Activated B cell treated with CpG ODN at 0.5 μM for 24 hours (primary cell): ENCODE measurements at regions of chr11 and their contacts with region 1.

Region 1: DNA sequence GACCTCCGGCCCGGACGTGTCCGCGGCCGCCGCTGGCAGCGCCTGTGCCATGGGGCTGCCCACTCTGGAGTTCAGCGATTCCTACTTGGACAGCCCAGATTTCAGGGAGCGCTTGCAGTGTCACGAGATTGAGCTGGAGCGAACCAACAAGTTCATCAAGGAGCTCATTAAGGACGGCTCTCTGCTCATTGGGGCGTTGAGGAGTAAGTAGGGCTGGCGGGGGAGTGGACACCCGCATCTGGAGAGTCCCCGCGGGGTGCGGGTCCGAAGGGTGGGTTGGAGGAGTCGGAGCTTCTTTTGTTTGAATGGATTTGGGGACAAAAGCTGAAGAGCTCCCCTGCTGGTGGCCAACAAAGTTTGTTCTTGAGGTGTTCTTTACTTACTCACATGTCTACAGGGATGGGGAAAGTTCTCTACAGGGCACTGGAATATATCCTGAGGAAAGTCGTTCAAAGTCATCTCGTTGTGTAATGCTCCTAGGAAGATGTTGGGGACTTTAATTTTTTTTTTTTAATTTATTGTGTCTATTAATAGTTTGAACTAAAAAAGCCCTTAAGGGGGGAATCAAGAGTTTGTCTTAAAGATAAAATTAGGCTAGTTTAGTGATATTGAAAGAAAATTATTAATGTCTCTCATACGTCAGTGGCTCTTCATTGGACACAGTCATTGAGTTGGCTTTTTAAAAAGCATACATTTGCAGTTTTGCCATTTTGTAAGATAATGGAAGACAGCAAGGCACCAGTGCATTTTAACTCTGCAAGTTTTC is 725 bp downstream of the ARHGAP42 start:
- DNase-seq: peak; percentile 53
- ATAC-seq: peak; percentile 50
- H3K4me3 Mint-ChIP-seq: peak overlapping the region; percentile 98
- H3K27ac Mint-ChIP-seq: peak overlapping the region; percentile 92
- H3K4me1 Mint-ChIP-seq: peaks cover 61% of the 10 kb centered on the region
- H3K27me3 Mint-ChIP-seq: no peaks in the 10 kb centered on the region
- CTCF ChIP-seq: peak; percentile 44

Region 2: GRCh38 chr11:100739666-100740065 is 51.9 kb after region 1 on chr11:
- CTCF ChIA-PET with region 1: no interaction called
- POLR2A ChIA-PET with region 1: interaction called, 3 read pairs
- intact Hi-C with region 1: loop called (anchors 5 kb)
- DNase-seq: no peak
- ATAC-seq: no peak
- H3K4me3 Mint-ChIP-seq: no peak overlapping the region
- H3K27ac Mint-ChIP-seq: no peak overlapping the region
- H3K4me1 Mint-ChIP-seq: peaks cover 38% of the 10 kb centered on the region
- H3K27me3 Mint-ChIP-seq: no peaks in the 10 kb centered on the region
- CTCF ChIP-seq: no peak

Region 3: DNA sequence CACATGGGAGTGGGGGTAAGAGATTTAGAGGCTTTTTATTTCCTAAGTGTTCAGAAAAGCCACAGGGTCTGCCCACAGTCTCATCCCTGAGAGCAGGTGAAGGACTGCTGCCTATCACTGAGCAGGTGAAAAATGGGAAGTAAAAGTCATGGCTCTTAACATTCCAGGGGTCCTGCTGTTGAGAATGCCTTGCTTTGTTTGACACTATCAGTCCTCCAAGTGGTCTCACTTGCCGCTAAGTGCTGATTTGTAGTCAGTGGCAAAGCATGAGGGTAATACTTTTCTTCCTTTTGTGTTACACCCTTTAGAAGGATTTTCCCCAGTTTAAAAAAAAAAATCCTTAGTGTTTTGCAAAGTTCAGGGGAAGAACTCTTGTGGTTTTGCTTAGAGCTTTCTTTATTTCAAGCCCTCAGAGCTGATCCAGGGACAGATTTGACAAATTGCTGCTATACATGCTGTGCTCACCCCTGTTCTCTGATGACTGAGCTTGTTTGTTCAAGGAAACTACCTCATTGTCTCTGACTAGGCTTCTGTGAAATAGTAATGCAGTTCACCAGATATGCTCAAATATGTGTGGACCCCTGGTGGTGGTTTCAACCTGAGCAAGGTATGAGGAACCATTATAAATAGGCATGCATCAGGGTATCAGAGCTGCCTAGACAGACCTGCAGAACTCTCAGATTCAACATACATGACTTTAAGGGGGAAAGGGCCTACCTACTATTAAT is 140.3 kb after region 1 on chr11:
- CTCF ChIA-PET with region 1: interaction called, 4 read pairs
- POLR2A ChIA-PET with region 1: no interaction called
- intact Hi-C with region 1: loop called (anchors 1 kb)
- DNase-seq: no peak
- ATAC-seq: peak; percentile 70
- H3K4me3 Mint-ChIP-seq: no peak overlapping the region
- H3K27ac Mint-ChIP-seq: no peak overlapping the region
- H3K4me1 Mint-ChIP-seq: peaks cover 2% of the 10 kb centered on the region
- H3K27me3 Mint-ChIP-seq: no peaks in the 10 kb centered on the region
- CTCF ChIP-seq: no peak

Region 4: GRCh38 chr11:100855466-100856067 is 167.8 kb after region 1 on chr11:
- CTCF ChIA-PET with region 1: interaction called, 7 read pairs
- POLR2A ChIA-PET with region 1: interaction called, 3 read pairs
- intact Hi-C with region 1: loop called (anchors 1 kb)
- DNase-seq: no peak
- ATAC-seq: no peak
- H3K4me3 Mint-ChIP-seq: no peak overlapping the region
- H3K27ac Mint-ChIP-seq: no peak overlapping the region
- H3K4me1 Mint-ChIP-seq: no peaks in the 10 kb centered on the region
- H3K27me3 Mint-ChIP-seq: no peaks in the 10 kb centered on the region
- CTCF ChIP-seq: peak; percentile 66